Activated T-helper 1 cell treated with anti-CD3 and anti-CD28 coated beads, Interleukin-12 subunit alpha, Interleukin-12 subunit beta, Interleukin-2, Interleukin-4 antibody, amounts not matched to agents 30 ng/mL and 10 ng/mL and 1 ng/mL, durations not matched to agents 14 hours and 24 hours and 36 hours (primary cell): ENCODE measurements at regions of chr6 and their contacts with region 1.

Region 1: DNA sequence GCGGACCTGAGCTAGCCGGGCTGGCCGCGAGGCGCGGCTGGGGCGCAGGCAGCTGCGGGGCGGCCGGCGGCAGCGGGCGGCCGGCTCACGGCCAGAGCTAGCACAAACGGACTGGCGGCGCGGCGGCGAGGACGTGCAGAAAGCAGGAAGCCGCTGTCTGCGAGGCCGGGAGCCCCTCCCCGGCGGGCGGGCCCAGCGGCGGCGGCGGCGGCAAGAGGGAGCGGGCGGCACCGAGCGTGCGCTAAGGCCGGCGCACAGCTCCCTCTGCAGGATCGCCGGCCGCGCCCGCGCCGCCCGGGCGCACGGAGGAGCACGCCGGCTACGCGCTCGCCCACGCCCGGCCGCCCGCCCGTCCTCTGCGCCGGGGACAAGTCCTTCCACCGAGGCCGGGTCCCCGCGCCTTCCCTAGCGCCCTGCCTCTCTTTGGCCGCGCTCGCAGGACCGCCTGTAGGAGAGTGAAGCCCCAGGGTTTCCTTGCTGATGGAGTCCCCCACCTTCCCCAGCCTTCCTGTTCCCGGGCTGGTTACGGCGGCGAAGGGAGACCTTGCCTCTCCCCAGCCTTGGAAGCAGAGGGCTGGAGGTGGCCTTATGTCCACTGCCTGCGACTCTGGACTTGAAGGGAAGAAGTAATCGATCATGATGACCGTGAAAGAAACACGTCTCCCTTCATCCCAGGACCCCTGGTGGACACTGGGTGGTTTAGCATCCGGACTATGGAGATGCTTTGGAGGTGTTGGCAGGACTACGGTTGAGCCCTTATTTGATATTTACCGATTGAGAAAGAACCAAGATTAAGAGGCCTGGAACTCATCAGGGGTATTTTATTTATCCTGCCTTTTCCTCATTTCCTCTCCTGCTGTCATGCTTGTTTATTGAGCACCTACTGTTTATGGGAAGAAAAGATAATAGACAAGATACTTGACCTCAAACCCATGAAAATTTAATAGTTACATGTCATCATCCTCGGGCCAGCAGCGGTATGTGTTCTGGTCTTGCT is at the start of gene PREP:
- DNase-seq: peak; percentile 84
- H3K4me3 Mint-ChIP-seq: peak within 1 kb of the TSS; percentile 93
- H3K27ac Mint-ChIP-seq: peak within 1 kb of the TSS; percentile 88
- H3K4me1 Mint-ChIP-seq: peaks cover 58% of the 10 kb centered on the region
- H3K27me3 Mint-ChIP-seq: peaks cover 5% of the 10 kb centered on the region
- total RNA-seq, gene PREP: 55.9 and 58.1 TPM in 2 replicates

Region 2: DNA sequence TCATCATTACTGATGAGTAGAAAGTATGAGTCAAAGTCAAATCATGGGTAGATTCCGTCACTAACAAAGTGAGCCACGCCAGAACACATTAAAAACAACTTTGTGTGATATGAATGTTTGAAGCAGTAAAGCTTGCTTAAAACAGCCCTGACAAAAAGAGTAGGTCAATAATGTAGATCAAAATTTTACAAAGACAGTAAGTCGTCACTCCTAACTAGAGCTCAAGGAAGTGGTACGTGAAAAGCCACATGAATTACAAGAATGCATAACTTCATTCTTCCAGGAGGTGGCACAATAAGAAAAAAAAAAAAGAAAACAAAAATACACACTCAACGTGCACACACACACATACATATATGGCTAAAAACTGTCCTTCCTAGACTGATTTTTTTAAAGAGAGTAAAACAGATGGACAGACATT is 613.5 kb before region 1 on chr6:
- intact Hi-C with region 1: loop called (anchors 1 kb)
- DNase-seq: no peak
- H3K4me3 Mint-ChIP-seq: peak overlapping the region; percentile 62
- H3K27ac Mint-ChIP-seq: peak overlapping the region; percentile 85
- H3K4me1 Mint-ChIP-seq: peaks cover 42% of the 10 kb centered on the region
- H3K27me3 Mint-ChIP-seq: no peaks in the 10 kb centered on the region

Region 3: GRCh38 chr6:105087571-105088211 is 315.5 kb before region 1 on chr6:
- intact Hi-C with region 1: loop called (anchors 1 kb)
- DNase-seq: no peak
- H3K4me3 Mint-ChIP-seq: no peak overlapping the region
- H3K27ac Mint-ChIP-seq: no peak overlapping the region
- H3K4me1 Mint-ChIP-seq: no peaks in the 10 kb centered on the region
- H3K27me3 Mint-ChIP-seq: peaks cover 10% of the 10 kb centered on the region

Region 4: GRCh38 chr6:105424175-105424783 is 21.0 kb after region 1 on chr6:
- intact Hi-C with region 1: loop called (anchors 1 kb)
- DNase-seq: peak; percentile 48
- H3K4me3 Mint-ChIP-seq: no peak overlapping the region
- H3K27ac Mint-ChIP-seq: no peak overlapping the region
- H3K4me1 Mint-ChIP-seq: no peaks in the 10 kb centered on the region
- H3K27me3 Mint-ChIP-seq: peaks cover 5% of the 10 kb centered on the region

Region 5: GRCh38 chr6:106512048-106512967 is 1109.1 kb after region 1 on chr6:
- intact Hi-C with region 1: loop called (anchors 5 kb)
- DNase-seq: peak; percentile 81
- H3K4me3 Mint-ChIP-seq: peak overlapping the region; percentile 91
- H3K27ac Mint-ChIP-seq: peak overlapping the region; percentile 93
- H3K4me1 Mint-ChIP-seq: peaks cover 58% of the 10 kb centered on the region
- H3K27me3 Mint-ChIP-seq: peaks cover 21% of the 10 kb centered on the region

Region 6: GRCh38 chr6:107033126-107033525 is 1629.9 kb after region 1 on chr6:
- intact Hi-C with region 1: loop called (anchors 2 kb)
- DNase-seq: no peak
- H3K4me3 Mint-ChIP-seq: no peak overlapping the region
- H3K27ac Mint-ChIP-seq: peak overlapping the region; percentile 25
- H3K4me1 Mint-ChIP-seq: peaks cover 20% of the 10 kb centered on the region
- H3K27me3 Mint-ChIP-seq: no peaks in the 10 kb centered on the region